CD8-positive, alpha-beta T cell (primary cell): ENCODE measurements at regions of chr6 and their contacts with region 1.

Region 1: DNA sequence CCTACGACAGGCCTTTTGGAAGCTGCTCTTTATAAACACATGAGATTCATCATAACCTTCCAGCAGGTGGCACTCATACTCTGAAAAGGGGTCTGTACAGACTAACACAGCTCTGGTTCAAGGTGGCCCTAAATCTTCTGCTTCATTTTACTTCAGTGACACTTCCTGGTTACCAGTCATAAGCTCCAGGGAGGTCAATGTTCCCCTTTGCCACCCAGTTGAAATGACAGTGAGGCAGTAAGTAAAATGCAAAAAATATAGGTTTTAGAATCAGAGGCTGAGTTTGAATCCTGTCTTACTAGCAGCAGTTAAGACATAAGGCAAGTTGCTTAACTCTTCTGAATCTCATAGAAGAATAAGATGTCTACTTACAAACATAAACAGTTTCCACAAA is 132.8 kb downstream of the CDK19 start:
- DNase-seq: peak; percentile 18 to 89 (median 63)
- ATAC-seq: peak; percentile 99
- H3K4me3 ChIP-seq: no peak overlapping the region
- H3K4me3 Mint-ChIP-seq: no peak overlapping the region
- H3K27ac ChIP-seq: no peak overlapping the region
- H3K27ac Mint-ChIP-seq: peak overlapping the region; percentile 20
- H3K4me1 ChIP-seq: peaks cover 8% of the 10 kb centered on the region
- H3K4me1 Mint-ChIP-seq: peaks cover 16% of the 10 kb centered on the region
- H3K27me3 ChIP-seq: no peaks in the 10 kb centered on the region
- H3K27me3 Mint-ChIP-seq: no peaks in the 10 kb centered on the region
- CTCF ChIP-seq: peak; percentile 67

Region 2: GRCh38 chr6:110528101-110528929 is 154.1 kb before region 1 on chr6:
- CTCF ChIA-PET with region 1: interaction called, 23 read pairs
- POLR2A ChIA-PET with region 1: no interaction called
- intact Hi-C with region 1: loop called (anchors 2 kb)
- DNase-seq: peak in 7 of 9 experiments; percentile 22 to 75 (median 53)
- ATAC-seq: peak; percentile 56
- H3K4me3 ChIP-seq: no peak overlapping the region
- H3K4me3 Mint-ChIP-seq: no peak overlapping the region
- H3K27ac ChIP-seq: no peak overlapping the region
- H3K27ac Mint-ChIP-seq: no peak overlapping the region
- H3K4me1 ChIP-seq: no peaks in the 10 kb centered on the region
- H3K4me1 Mint-ChIP-seq: no peaks in the 10 kb centered on the region
- H3K27me3 ChIP-seq: no peaks in the 10 kb centered on the region
- H3K27me3 Mint-ChIP-seq: peaks cover 3% of the 10 kb centered on the region
- CTCF ChIP-seq: peak; percentile 87

Region 3: GRCh38 chr6:110944681-110945151 is 262.3 kb after region 1 on chr6:
- CTCF ChIA-PET with region 1: interaction called, 52 read pairs
- POLR2A ChIA-PET with region 1: interaction called, 3 read pairs
- intact Hi-C with region 1: loop called (anchors 1 kb)
- DNase-seq: peak in 3 of 9 experiments; percentile 15 to 46 (median 25)
- ATAC-seq: peak; percentile 88
- H3K4me3 ChIP-seq: no peak overlapping the region
- H3K4me3 Mint-ChIP-seq: no peak overlapping the region
- H3K27ac ChIP-seq: no peak overlapping the region
- H3K27ac Mint-ChIP-seq: no peak overlapping the region
- H3K4me1 ChIP-seq: peaks cover 5% of the 10 kb centered on the region
- H3K4me1 Mint-ChIP-seq: peaks cover 4% of the 10 kb centered on the region
- H3K27me3 ChIP-seq: no peaks in the 10 kb centered on the region
- H3K27me3 Mint-ChIP-seq: no peaks in the 10 kb centered on the region
- CTCF ChIP-seq: no peak

Region 4: DNA sequence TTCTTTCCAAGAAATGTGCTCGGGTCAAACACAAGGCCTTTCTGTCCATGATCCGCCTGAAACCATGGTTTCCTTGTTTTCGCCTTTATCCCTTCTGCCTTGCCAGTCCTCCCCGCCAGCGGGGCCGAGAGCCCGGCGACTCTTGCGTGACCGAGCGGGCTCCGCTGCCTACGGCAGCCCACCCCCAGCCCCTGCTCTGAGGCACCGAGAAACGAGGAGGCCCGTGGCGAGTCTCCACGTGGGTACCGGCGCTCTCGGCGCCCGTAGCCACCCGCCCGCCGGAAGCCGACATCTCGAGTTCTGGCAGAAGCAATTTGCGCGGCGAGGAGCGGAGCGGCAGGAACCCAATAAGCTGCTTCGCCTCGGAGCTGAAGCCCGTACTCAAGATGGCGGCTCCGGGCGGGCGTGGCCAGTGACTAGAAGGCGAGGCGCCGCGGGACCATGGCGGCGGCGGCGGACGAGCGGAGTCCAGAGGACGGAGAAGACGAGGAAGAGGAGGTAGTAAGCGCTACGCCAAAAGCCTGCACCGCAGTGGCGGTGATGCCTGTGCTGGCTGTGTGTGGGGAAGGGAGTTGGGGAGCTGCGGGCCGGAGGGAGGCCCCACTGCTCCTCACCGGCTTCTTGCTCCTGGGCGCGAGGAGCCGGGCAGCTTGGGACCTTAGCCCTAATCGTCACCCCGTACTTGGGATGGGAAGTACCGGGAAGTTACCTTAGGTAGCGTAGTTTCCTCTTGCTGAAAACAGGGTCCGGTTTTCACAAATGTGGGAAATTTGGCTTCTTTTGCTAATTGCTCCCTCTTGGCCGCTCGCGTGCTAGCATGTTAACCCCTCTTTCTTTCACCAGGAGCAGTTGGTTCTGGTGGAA is 276.1 kb after region 1 on chr6 and contains the start of gene GTF3C6:
- CTCF ChIA-PET with region 1: interaction called, 14 read pairs
- POLR2A ChIA-PET with region 1: interaction called, 7 read pairs
- intact Hi-C with region 1: no loop called
- DNase-seq: peak; percentile 81 to 95 (median 93)
- ATAC-seq: peak; percentile 99
- H3K4me3 ChIP-seq: peak within 1 kb of the TSS; percentile 97 to 99
- H3K4me3 Mint-ChIP-seq: peak within 1 kb of the TSS; percentile 100
- H3K27ac ChIP-seq: peak within 1 kb of the TSS; percentile 91 to 92
- H3K27ac Mint-ChIP-seq: peak within 1 kb of the TSS; percentile 100
- H3K4me1 ChIP-seq: peaks cover 5% of the 10 kb centered on the region
- H3K4me1 Mint-ChIP-seq: peaks cover 21% of the 10 kb centered on the region
- H3K27me3 ChIP-seq: no peaks in the 10 kb centered on the region
- H3K27me3 Mint-ChIP-seq: peaks cover 5% of the 10 kb centered on the region
- CTCF ChIP-seq: no peak
- total RNA-seq, gene GTF3C6: 25.0 to 26.3 TPM

Region 5: GRCh38 chr6:110999634-111000270 is 317.3 kb after region 1 on chr6:
- CTCF ChIA-PET with region 1: interaction called, 10 read pairs
- POLR2A ChIA-PET with region 1: interaction called, 3 read pairs
- intact Hi-C with region 1: loop called (anchors 1 kb)
- DNase-seq: peak in 2 of 9 experiments; percentile 47 to 56
- ATAC-seq: peak; percentile 23
- H3K4me3 ChIP-seq: no peak overlapping the region
- H3K4me3 Mint-ChIP-seq: no peak overlapping the region
- H3K27ac ChIP-seq: no peak overlapping the region
- H3K27ac Mint-ChIP-seq: no peak overlapping the region
- H3K4me1 ChIP-seq: no peaks in the 10 kb centered on the region
- H3K4me1 Mint-ChIP-seq: no peaks in the 10 kb centered on the region
- H3K27me3 ChIP-seq: no peaks in the 10 kb centered on the region
- H3K27me3 Mint-ChIP-seq: no peaks in the 10 kb centered on the region
- CTCF ChIP-seq: peak; percentile 36